PC-3 (cell line): ENCODE measurements at regions of chr12 and their contacts with region 1.

Region 1: DNA sequence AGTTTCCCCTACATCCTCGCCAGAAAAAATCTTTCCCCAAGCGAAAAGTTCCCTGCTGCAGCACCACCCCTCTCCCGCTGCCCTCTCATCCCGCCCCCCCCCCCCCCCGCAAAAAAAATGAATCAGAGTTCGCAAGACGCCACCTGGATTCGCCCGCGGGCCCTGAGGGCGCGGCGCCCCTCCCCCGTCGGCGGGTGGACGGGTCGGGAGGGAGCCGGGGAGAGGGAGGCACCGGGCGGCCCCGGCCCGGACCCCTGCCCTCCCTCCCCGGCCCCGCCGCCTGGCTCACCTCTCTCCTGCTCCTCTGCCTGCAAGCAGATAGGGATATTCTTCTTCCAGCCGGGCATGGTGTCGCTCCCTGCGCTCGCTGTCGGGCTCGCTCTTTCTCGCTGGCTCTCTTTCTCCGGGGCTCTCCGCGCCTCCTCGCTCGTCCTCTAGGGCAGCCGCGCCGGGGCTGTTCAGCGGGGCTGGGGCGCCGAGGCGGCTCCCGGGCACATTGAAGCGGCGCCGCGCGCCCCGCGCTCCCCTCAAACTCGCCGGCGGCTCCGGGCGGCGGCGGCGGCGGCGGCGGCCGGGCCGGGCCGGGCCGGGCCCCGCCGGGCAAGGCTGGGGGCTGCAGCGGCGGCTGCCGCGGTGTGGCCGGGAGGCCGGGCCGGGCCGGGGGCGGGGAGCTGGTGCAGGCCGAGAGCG is 200.3 kb upstream of the CAND1 start:
- DNase-seq: peak; percentile 82
- ATAC-seq: peak; percentile 59
- H3K4me3 ChIP-seq: peak overlapping the region; percentile 79
- H3K27ac ChIP-seq: peak overlapping the region; percentile 56
- H3K4me1 ChIP-seq: peaks cover 23% of the 10 kb centered on the region
- H3K27me3 ChIP-seq: no peaks in the 10 kb centered on the region
- CTCF ChIP-seq: no peak

Region 2: GRCh38 chr12:66860752-66861750 is 207.9 kb before region 1 on chr12:
- CTCF ChIA-PET with region 1: no interaction called
- POLR2A ChIA-PET with region 1: no interaction called
- intact Hi-C with region 1: loop called (anchors 5 kb)
- DNase-seq: peak; percentile 81
- ATAC-seq: peak; percentile 35; the same call in 1 of the 2 replicates
- H3K4me3 ChIP-seq: no peak overlapping the region
- H3K27ac ChIP-seq: no peak overlapping the region
- H3K4me1 ChIP-seq: peaks cover 9% of the 10 kb centered on the region
- H3K27me3 ChIP-seq: no peaks in the 10 kb centered on the region
- CTCF ChIP-seq: peak; percentile 97

Region 3: DNA sequence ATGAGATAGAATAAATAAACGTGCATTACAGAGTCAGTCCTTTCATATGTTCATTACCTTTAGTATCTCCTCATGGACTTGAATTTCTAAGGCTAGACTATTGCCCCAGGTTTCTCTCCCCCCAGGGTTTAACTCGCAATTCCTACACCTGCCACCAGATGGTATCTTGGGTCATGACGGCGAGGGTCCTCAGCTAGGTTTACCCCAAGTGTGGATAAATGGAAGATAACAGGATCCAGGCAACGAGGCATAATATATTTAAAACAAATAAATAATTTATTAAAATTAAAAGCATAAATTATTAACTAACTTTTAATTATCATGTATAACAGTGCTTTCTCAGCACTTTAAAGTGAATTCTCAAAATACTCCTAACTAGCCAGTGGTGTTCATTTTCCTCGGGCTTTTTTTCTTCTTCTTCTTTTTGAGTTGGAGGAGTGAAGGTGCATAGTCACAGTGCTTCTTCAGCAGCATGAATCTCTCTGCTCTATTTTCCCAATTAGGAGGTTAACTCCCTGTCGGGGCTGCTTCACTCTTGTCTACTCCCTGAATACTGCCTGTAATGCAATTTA is 43.3 kb before region 1 on chr12:
- CTCF ChIA-PET with region 1: no interaction called
- POLR2A ChIA-PET with region 1: no interaction called
- intact Hi-C with region 1: loop called (anchors 1 kb)
- DNase-seq: peak; percentile 77
- ATAC-seq: peak; percentile 46; the same call in 1 of the 2 replicates
- H3K4me3 ChIP-seq: no peak overlapping the region
- H3K27ac ChIP-seq: no peak overlapping the region
- H3K4me1 ChIP-seq: no peaks in the 10 kb centered on the region
- H3K27me3 ChIP-seq: no peaks in the 10 kb centered on the region
- CTCF ChIP-seq: peak; percentile 73

Region 4: DNA sequence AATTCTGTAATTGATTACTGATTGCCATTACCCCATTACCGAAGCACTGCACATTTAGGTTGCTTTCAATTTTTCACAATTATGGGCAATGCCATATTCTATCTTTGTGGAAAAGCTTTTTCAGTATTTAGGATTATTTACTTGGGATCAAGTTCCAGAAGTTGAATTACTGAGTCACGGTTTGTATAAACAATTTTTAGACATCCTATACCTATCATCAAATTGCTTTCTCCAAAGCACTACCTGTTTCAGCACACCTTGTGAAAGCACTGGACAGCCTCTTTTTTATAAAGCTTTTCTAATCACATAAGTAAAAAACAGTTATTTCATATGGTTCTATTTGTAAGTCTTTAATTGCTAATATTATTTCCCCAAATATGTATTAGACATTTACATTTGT is 21.3 kb before region 1 on chr12:
- CTCF ChIA-PET with region 1: interaction called, 13 read pairs
- POLR2A ChIA-PET with region 1: no interaction called
- intact Hi-C with region 1: no loop called
- DNase-seq: peak; percentile 60
- ATAC-seq: peak; percentile 64
- H3K4me3 ChIP-seq: peak overlapping the region; percentile 24; the same call in 1 of the 2 replicates
- H3K27ac ChIP-seq: peak overlapping the region; percentile 14; the same call in 1 of the 2 replicates
- H3K4me1 ChIP-seq: peaks cover 60% of the 10 kb centered on the region
- H3K27me3 ChIP-seq: no peaks in the 10 kb centered on the region
- CTCF ChIP-seq: no peak

Region 5: GRCh38 chr12:67107751-67108269 is 38.9 kb after region 1 on chr12:
- CTCF ChIA-PET with region 1: no interaction called
- POLR2A ChIA-PET with region 1: no interaction called
- intact Hi-C with region 1: no loop called
- DNase-seq: no peak
- ATAC-seq: no peak
- H3K4me3 ChIP-seq: no peak overlapping the region
- H3K27ac ChIP-seq: no peak overlapping the region
- H3K4me1 ChIP-seq: no peaks in the 10 kb centered on the region
- H3K27me3 ChIP-seq: no peaks in the 10 kb centered on the region; the same call in 1 of the 2 replicates
- CTCF ChIP-seq: no peak

Region 6: DNA sequence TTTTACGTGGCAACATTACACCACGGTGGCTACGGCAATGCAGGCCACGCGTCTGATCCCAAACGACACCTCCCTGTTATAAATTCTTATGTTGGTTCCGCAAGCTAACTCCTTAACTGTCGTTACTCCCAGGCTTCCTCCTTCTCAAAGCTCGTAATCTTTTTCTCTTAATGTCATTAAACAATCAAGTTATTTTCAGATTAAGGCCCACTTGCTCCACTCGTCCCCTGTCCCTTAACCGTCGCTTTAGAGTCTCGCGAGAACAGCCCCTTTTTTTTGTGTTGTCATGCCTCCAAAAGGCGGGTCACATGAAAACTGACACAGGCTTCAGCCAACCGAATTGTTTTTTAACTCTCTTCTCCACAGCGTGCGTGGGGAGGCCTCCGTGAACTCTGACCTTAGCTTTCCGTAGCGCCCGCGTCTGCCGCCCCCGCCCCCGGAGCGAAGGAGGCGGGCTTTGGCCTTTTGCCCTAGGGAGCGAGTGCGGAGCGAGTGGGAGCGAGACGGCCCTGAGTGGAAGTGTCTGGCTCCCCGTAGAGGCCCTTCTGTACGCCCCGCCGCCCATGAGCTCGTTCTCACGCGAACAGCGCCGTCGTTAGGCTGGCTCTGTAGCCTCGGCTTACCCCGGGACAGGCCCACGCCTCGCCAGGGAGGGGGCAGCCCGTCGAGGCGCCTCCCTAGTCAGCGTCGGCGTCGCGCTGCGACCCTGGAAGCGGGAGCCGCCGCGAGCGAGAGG is 200.2 kb after region 1 on chr12 and contains the start of gene CAND1:
- CTCF ChIA-PET with region 1: no interaction called
- POLR2A ChIA-PET with region 1: interaction called, 28 read pairs
- intact Hi-C with region 1: no loop called
- DNase-seq: peak; percentile 98
- ATAC-seq: peak; percentile 78
- H3K4me3 ChIP-seq: peak within 1 kb of the TSS; percentile 88
- H3K27ac ChIP-seq: peak within 1 kb of the TSS; percentile 90
- H3K4me1 ChIP-seq: peaks cover 22% of the 10 kb centered on the region
- H3K27me3 ChIP-seq: no peaks in the 10 kb centered on the region
- CTCF ChIP-seq: no peak
- total RNA-seq, gene CAND1: 124 and 129 TPM in 2 replicates